Pancreas (tissue), 10 donors: ENCODE measurements at regions of chr7 and their contacts with region 1.

Region 1: DNA sequence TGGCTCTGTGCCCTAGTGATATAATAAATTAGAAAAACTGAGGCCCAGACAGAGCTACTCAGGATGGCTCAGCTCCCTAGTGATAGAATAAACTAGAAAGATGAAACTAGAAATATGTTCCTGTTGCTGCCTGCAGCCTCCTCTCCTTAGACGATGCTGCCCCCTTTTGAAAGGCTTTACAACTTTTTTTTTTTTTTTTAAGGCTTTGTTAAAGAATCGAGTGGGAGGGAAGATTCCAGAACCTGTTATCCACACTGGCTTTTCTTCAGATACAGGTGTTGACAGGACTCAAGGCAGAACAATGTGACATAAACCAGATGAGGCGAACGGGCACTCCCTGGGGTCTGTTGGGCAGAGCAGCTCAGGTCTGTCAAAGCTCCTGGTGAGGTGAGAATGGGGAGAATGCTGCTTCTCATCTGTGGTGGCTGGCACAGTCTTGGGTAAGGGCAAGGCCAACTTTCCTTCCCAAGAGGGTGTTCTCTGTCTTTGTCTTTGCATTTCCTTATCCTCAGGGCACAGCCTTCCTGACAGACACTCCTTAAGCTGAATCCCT is 175.1 kb downstream of the COBL start:
- DNase-seq: peak in 1 of 6 donors; percentile 23
- ATAC-seq: peak; percentile 47 to 79 (median 73)
- H3K4me3 ChIP-seq: no peak overlapping the region
- H3K27ac ChIP-seq: peak overlapping the region in 2 of 4 donors; percentile 17 to 43
- H3K4me1 ChIP-seq: peaks cover 29 to 37% (median 33%) of the 10 kb centered on the region in 3 donors
- H3K27me3 ChIP-seq: no peaks in the 10 kb centered on the region
- CTCF ChIP-seq: peak in 3 of 4 donors; percentile 29 to 45 (median 35)

Region 2: GRCh38 chr7:50771199-50772002 is 370.1 kb before region 1 on chr7:
- intact Hi-C with region 1: loop called in 1 of 3 experiments (anchors 10 kb)
- DNase-seq: peak in 5 of 6 donors; percentile 63 to 79 (median 67)
- ATAC-seq: peak; percentile 84 to 90 (median 85)
- H3K4me3 ChIP-seq: no peak overlapping the region
- H3K27ac ChIP-seq: peak overlapping the region in 2 of 4 donors; percentile 52 to 58
- H3K4me1 ChIP-seq: peaks cover 42 to 57% (median 42%) of the 10 kb centered on the region in 3 donors
- H3K27me3 ChIP-seq: no peaks in the 10 kb centered on the region
- CTCF ChIP-seq: no peak

Region 3: GRCh38 chr7:50793115-50793946 is 348.2 kb before region 1 on chr7:
- intact Hi-C with region 1: loop called in 1 of 3 experiments (anchors 10 kb)
- DNase-seq: peak; percentile 77 to 90 (median 85)
- ATAC-seq: peak; percentile 71 to 82 (median 78)
- H3K4me3 ChIP-seq: peak overlapping the region; percentile 49 to 79 (median 71)
- H3K27ac ChIP-seq: peak overlapping the region; percentile 65 to 88 (median 83)
- H3K4me1 ChIP-seq: peaks cover 5 to 23% (median 14%) of the 10 kb centered on the region in 3 donors
- H3K27me3 ChIP-seq: no peaks in the 10 kb centered on the region
- CTCF ChIP-seq: no peak

Region 4: DNA sequence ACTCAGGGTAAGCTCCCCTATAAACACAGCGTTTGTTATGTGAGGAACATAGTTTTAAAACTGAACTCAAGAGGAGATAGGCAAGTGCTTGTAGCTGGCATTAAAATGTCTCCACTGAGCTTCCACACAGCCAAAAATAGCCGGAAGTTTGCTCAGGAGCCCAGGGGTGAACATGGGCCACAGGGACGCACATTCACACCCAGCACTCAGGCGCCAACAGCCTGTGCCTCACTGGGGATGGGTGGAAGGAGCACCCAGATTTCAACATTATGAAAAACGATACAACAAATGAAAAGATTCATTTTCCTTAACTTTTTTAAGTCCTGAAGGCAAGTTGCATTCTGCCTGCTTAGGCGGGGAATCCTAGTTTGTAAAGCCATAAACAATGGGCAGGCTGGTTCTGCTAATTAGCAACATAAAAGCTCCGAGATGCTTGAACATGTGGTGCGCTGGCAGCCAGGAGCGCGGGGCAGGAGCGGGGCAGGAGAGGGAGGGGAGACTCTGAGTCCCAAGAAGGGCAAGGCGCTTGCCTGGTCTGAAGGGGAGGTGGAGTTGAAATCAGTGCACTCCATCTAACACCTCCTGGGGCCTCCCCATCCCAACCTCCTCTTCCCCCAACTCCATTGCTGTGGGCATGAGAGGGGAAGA is 60.8 kb before region 1 on chr7:
- intact Hi-C with region 1: loop called in 1 of 3 experiments (anchors 10 kb)
- DNase-seq: no peak
- ATAC-seq: no peak
- H3K4me3 ChIP-seq: no peak overlapping the region
- H3K27ac ChIP-seq: no peak overlapping the region
- H3K4me1 ChIP-seq: peaks cover 12 to 20% (median 15%) of the 10 kb centered on the region in 3 donors
- H3K27me3 ChIP-seq: no peaks in the 10 kb centered on the region
- CTCF ChIP-seq: no peak